OCI-LY7 (cell line): ENCODE measurements at regions of chr18 and their contacts with region 1.

Region 1: DNA sequence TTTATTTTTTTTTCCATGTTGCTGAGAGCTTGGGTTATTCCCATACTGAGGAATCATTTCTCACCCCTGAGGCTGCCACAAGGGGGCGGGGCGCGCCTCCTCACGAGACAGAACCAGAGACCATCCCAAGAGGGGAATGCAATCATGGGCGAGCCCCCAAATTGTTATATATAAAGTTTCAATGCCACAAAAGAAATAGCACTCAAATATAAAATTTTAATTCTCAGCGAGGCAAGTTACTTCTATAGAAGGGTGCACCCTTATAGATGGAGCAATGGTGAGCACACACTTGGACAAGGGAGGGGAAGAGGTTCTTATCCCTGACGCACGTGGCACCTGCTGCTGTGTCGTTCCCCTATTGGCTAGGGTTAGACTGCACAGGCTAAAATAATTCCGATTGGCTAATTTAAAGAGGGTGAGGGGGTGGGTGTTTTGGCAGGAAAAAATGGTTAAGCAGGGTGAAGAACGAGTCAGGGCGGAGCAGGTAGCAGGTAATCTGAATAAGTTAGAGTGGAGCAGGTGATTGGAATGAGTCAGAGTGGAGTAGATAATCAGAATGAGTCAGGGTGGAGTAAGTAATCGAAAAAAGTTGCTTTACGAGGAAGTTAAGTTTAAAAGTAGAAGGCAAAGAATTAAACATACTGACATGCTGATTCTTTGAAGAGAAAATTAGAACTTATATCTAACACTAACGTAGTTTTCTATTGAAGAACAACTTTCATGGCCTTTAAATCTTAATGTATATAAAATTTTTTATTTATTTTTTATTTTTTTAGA is 177.5 kb downstream of the MTCL1 start:
- DNase-seq: peak; percentile 80
- H3K4me3 ChIP-seq: no peak overlapping the region
- H3K27ac ChIP-seq: no peak overlapping the region
- H3K4me1 ChIP-seq: no peaks in the 10 kb centered on the region
- CTCF ChIP-seq: peak; percentile 74

Region 2: DNA sequence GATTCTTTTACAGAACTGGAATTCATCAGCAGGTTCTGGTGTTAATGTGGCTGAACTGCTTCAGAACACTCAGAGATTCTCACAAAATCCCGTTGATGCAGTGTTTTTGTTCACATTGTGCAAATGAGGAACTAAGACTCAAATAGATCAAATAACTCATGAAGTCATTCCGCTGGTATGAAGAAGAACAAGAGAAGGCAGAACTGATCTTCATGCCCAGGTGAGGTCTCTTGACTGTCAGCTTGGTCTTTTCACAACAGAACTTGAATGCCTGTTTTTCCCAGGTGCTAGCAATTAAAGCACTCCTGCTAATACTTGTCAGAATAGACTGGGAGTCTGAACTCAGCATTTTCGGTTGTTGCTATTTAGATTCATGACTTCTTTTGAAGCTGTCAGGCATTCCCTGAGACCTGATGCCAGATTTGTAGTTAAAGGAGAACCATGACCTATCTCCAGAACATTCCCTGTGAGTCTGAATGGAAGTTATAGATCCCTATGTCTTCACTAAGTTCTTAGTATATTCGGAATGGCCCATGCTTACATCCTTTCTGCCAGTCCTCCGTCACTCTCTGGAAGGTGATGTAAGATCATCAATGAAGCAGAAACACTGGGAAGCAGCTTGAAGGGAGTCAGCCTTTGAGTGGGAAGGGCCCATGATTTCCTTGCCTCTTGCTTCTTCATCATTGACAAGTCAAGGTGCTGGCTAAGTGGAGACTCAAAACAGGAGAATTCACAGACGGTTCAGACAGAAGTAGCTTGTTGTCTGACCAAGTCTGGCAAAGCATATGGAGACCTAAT is 21.8 kb before region 1 on chr18:
- CTCF ChIA-PET with region 1: no interaction called
- POLR2A ChIA-PET with region 1: no interaction called
- intact Hi-C with region 1: loop called (anchors 2 kb)
- DNase-seq: peak; percentile 87
- H3K4me3 ChIP-seq: no peak overlapping the region
- H3K27ac ChIP-seq: peak overlapping the region; percentile 63
- H3K4me1 ChIP-seq: peaks cover 23% of the 10 kb centered on the region
- CTCF ChIP-seq: no peak

Region 3: DNA sequence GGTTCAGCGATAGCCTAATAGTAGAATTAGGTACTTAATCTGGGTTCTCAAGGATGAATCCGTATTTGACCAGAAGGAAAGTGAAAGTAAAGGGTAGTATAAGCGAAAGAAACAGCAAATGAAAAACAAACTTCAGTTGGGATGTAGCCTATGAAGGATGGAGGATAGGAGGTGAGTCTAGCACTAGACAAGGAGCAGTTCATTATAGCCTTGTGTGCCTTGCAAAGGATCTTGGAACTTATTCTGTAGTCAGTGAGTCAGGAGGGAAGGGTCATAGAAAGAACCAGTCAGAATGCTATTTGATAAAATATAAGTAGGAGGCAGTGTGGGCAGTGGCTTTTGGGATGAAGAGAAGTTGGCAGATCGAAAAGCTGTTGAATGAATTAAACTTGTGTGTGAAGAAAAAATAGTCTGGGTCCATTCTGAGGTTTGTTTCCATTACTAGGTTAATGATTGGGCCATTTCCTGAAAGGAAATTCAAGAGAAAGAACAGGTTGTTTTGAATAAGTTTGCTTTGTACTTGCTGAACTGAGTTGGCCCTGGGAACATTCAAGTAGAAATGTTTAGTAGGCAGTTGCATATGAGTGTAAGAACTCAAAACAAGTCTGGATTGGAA is 302.3 kb after region 1 on chr18:
- CTCF ChIA-PET with region 1: no interaction called
- POLR2A ChIA-PET with region 1: no interaction called
- intact Hi-C with region 1: no loop called
- DNase-seq: no peak
- H3K4me3 ChIP-seq: no peak overlapping the region
- H3K27ac ChIP-seq: no peak overlapping the region
- H3K4me1 ChIP-seq: no peaks in the 10 kb centered on the region
- CTCF ChIP-seq: no peak